CD8-positive, alpha-beta T cell (primary cell): ENCODE measurements at regions of chr14 and their contacts with region 1.

Region 1: GRCh38 chr14:73759714-73760597 is 45.8 kb upstream of the PNMA1 start:
- DNase-seq: peak; percentile 92 to 99 (median 97)
- ATAC-seq: peak; percentile 73
- H3K4me3 ChIP-seq: peak overlapping the region; percentile 55 to 69
- H3K4me3 Mint-ChIP-seq: peak overlapping the region; percentile 92
- H3K27ac ChIP-seq: peak overlapping the region; percentile 82 to 94
- H3K27ac Mint-ChIP-seq: peak overlapping the region; percentile 99
- H3K4me1 ChIP-seq: peaks cover 76% of the 10 kb centered on the region
- H3K4me1 Mint-ChIP-seq: peaks cover 81% of the 10 kb centered on the region
- H3K27me3 ChIP-seq: no peaks in the 10 kb centered on the region
- H3K27me3 Mint-ChIP-seq: no peaks in the 10 kb centered on the region
- CTCF ChIP-seq: peak; percentile 16

Region 2: GRCh38 chr14:72665259-72665658 is 1094.7 kb before region 1 on chr14:
- CTCF ChIA-PET with region 1: no interaction called
- POLR2A ChIA-PET with region 1: no interaction called
- intact Hi-C with region 1: no loop called
- DNase-seq: no peak
- ATAC-seq: no peak
- H3K4me3 ChIP-seq: no peak overlapping the region
- H3K4me3 Mint-ChIP-seq: no peak overlapping the region
- H3K27ac ChIP-seq: no peak overlapping the region
- H3K27ac Mint-ChIP-seq: no peak overlapping the region
- H3K4me1 ChIP-seq: no peaks in the 10 kb centered on the region
- H3K4me1 Mint-ChIP-seq: no peaks in the 10 kb centered on the region
- H3K27me3 ChIP-seq: no peaks in the 10 kb centered on the region
- H3K27me3 Mint-ChIP-seq: peaks cover 9% of the 10 kb centered on the region
- CTCF ChIP-seq: no peak

Region 3: DNA sequence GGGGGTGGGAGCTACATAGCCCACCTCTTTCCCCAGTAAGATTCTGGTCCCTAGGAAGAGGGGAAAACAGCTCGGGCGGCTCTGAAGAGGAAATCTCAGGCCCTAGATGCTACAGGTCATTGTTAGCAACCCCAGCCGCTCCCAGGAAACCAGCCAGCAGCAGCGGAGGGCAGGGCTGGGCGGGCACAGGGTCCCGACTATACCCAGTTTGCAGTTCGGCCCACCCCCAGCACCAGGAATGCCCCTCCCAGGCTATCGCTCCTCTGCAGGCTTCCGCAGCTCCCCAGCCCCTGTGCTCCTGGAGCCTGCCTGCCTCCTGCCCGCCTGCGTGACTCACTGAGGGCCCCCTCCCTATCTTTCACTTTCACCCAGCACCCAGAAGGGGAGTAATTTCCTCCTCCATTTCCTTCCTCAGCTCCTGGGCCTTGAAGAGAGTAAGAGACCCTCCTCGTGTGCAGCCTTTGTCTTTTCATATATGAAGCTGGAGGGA is 18.5 kb before region 1 on chr14:
- CTCF ChIA-PET with region 1: interaction called, 146 read pairs
- POLR2A ChIA-PET with region 1: interaction called, 102 read pairs
- intact Hi-C with region 1: loop called (anchors 1 kb)
- DNase-seq: peak in 7 of 9 experiments; percentile 61 to 86 (median 75)
- ATAC-seq: peak; percentile 79
- H3K4me3 ChIP-seq: peak overlapping the region; percentile 25 to 42
- H3K4me3 Mint-ChIP-seq: peak overlapping the region; percentile 80
- H3K27ac ChIP-seq: peak overlapping the region; percentile 29 to 83
- H3K27ac Mint-ChIP-seq: peak overlapping the region; percentile 94
- H3K4me1 ChIP-seq: peaks cover 82% of the 10 kb centered on the region
- H3K4me1 Mint-ChIP-seq: peaks cover 74% of the 10 kb centered on the region
- H3K27me3 ChIP-seq: no peaks in the 10 kb centered on the region
- H3K27me3 Mint-ChIP-seq: no peaks in the 10 kb centered on the region
- CTCF ChIP-seq: no peak

Region 4: DNA sequence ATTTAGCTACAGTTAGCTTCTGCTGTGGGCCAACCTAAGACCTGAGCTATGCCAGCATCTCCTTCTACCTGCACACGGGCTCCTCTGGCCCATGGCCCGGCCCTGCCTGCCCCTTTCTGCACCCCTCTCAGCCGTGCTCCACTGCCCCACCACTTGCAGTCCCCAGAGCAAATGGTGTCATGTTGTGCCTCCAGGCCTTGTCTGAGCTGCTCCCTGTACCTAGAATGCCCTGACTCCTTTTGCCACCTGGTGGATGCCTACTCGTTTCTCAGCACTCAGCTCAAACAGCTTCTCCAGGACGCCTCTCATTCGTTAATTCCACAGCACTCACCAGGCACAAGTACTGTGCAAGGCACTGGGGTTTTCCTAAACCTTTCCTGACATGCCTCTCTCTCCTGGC is 17.4 kb after region 1 on chr14:
- CTCF ChIA-PET with region 1: interaction called, 21 read pairs
- POLR2A ChIA-PET with region 1: interaction called, 58 read pairs
- intact Hi-C with region 1: no loop called
- DNase-seq: peak in 2 of 9 experiments; percentile 47 to 58
- ATAC-seq: peak; percentile 73
- H3K4me3 ChIP-seq: no peak overlapping the region
- H3K4me3 Mint-ChIP-seq: no peak overlapping the region
- H3K27ac ChIP-seq: no peak overlapping the region
- H3K27ac Mint-ChIP-seq: peak overlapping the region; percentile 89
- H3K4me1 ChIP-seq: peaks cover 55% of the 10 kb centered on the region
- H3K4me1 Mint-ChIP-seq: peaks cover 67% of the 10 kb centered on the region
- H3K27me3 ChIP-seq: no peaks in the 10 kb centered on the region
- H3K27me3 Mint-ChIP-seq: no peaks in the 10 kb centered on the region
- CTCF ChIP-seq: no peak

Region 5: GRCh38 chr14:73825551-73826188 is 65.7 kb after region 1 on chr14:
- CTCF ChIA-PET with region 1: interaction called, 7 read pairs
- POLR2A ChIA-PET with region 1: no interaction called
- intact Hi-C with region 1: loop called in 1 of 2 experiments (anchors 1 kb)
- DNase-seq: peak; percentile 48 to 86 (median 81)
- ATAC-seq: peak; percentile 97
- H3K4me3 ChIP-seq: no peak overlapping the region
- H3K4me3 Mint-ChIP-seq: no peak overlapping the region
- H3K27ac ChIP-seq: no peak overlapping the region
- H3K27ac Mint-ChIP-seq: no peak overlapping the region
- H3K4me1 ChIP-seq: no peaks in the 10 kb centered on the region
- H3K4me1 Mint-ChIP-seq: peaks cover 10% of the 10 kb centered on the region
- H3K27me3 ChIP-seq: no peaks in the 10 kb centered on the region
- H3K27me3 Mint-ChIP-seq: no peaks in the 10 kb centered on the region
- CTCF ChIP-seq: peak; percentile 86

Region 6: DNA sequence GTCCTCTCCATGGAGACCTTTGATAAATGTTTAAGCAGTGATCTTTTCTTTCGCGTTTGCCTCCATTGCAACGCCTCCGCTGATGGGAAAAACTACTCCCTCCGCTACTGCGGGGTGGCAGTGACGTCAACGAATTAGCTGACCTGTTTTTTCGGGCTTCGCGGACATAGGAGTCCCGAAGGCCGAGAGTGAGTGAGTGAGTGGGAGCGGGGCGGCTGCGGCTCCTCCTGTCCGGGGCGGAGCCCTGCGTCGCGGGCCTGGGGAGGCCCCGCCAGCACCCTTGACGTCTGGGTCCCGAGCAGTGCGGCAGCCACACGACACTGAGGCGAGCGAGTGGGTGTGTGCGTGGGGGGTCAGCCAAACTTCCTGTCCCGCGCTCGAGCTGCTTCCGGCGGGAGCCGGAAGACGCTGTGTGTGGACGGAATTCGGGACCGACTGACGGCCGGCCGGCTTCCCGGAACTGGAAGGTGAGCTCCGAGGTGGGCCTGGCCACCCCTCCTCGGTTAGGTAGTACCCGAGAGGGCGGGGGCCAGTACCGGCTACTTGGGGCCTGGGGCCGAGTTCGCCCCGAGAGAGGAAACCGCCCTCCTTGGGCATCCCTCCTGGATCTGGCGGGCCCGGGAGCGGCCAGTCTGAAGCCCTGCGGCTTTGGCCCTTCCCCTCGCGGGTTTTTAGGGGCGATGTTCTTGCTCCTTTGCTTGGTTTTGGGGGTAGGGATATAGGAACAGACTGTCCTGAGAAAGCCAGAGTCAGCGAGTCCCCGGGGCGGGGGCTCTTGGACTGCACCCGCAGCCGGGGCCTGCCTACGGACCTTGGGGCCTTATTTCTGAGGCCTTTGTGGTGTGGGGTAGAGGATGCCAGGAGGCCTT is 126.7 kb after region 1 on chr14 and contains the start of gene ZNF410:
- CTCF ChIA-PET with region 1: no interaction called
- POLR2A ChIA-PET with region 1: interaction called, 9 read pairs
- intact Hi-C with region 1: loop called in 1 of 2 experiments (anchors 1 kb)
- DNase-seq: peak; percentile 70 to 95 (median 85)
- ATAC-seq: peak; percentile 98
- H3K4me3 ChIP-seq: peak within 1 kb of the TSS; percentile 90
- H3K4me3 Mint-ChIP-seq: peak within 1 kb of the TSS; percentile 98
- H3K27ac ChIP-seq: peak within 1 kb of the TSS; percentile 91 to 99
- H3K27ac Mint-ChIP-seq: peak within 1 kb of the TSS; percentile 99
- H3K4me1 ChIP-seq: peaks cover 19% of the 10 kb centered on the region
- H3K4me1 Mint-ChIP-seq: peaks cover 46% of the 10 kb centered on the region
- H3K27me3 ChIP-seq: no peaks in the 10 kb centered on the region
- H3K27me3 Mint-ChIP-seq: no peaks in the 10 kb centered on the region
- CTCF ChIP-seq: no peak
- total RNA-seq, gene ZNF410: 86.6 to 89.2 TPM